Activated naive CD8-positive, alpha-beta T cell treated with anti-CD3 and anti-CD28 coated beads, Interleukin-2, amount 10 ng/mL, durations not matched to agents 7 days and 5 days (primary cell): ENCODE measurements at regions of chr17 and their contacts with region 1.

Region 1: DNA sequence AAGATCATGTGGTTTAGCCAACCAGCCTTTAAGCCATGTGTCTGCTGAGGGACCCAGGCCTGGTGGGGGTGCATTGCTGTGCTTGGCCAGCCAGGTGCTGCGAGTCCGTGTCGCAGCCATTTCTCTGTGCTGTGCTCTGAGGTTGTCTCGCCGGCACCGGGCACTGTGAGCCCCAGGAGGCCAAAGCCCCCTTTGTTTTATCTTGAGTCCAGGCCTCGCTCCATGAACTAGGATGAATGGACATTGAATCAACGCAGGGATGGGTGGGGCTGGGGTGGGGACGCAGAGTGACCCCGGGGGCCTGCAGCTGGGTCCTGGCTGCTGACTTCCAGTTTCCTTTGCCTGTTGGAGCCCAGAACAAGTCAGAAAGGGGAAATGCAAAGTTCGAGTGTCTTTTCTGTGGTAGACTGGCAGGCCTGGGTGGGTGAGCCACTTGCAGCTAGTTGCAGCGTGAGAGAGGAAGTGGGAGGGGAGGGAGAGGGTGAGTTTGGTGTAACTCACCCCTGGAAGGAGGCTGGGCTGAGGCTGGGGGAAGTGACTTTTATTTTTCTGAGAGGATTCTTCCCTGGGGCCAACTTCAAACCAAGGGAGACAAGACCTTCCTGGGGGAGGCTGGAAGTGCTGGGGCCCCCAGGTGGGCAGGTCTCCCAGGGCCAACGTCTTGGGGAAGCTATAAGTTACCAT is 324.7 kb downstream of the SEC14L1 start:
- DNase-seq: peak; percentile 69
- ATAC-seq: peak; percentile 80
- H3K4me3 Mint-ChIP-seq: peak overlapping the region; percentile 79
- H3K27ac Mint-ChIP-seq: peak overlapping the region; percentile 93
- H3K4me1 Mint-ChIP-seq: peaks cover 77% of the 10 kb centered on the region
- H3K27me3 Mint-ChIP-seq: no peaks in the 10 kb centered on the region

Region 2: GRCh38 chr17:77354420-77355241 is 110.9 kb before region 1 on chr17:
- POLR2A ChIA-PET with region 1: no interaction called
- DNase-seq: peak; percentile 19
- ATAC-seq: no peak
- H3K4me3 Mint-ChIP-seq: no peak overlapping the region
- H3K27ac Mint-ChIP-seq: no peak overlapping the region
- H3K4me1 Mint-ChIP-seq: peaks cover 15% of the 10 kb centered on the region
- H3K27me3 Mint-ChIP-seq: peaks cover 1% of the 10 kb centered on the region

Region 3: DNA sequence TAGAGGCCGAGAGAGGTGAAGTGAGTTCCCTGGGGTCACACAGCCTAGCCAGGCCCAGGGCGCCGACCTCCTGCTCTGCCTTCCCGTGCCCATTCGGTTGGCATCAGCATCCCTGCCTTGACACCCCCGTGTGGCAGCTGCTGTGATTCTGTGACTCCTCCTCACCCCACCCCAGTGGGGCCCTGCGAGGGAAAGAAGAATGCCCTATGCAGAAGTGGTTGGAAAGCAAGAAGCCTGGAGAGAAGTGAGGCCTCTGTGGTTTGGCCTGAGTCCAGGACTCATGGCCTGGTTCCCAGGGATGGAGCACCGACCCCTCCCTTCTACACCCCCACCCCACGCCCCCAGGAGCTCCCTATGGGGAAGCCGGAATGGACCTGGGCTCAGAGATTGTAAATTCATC is 28.5 kb before region 1 on chr17:
- POLR2A ChIA-PET with region 1: interaction called, 123 read pairs
- DNase-seq: no peak
- ATAC-seq: no peak
- H3K4me3 Mint-ChIP-seq: peak overlapping the region; percentile 93
- H3K27ac Mint-ChIP-seq: peak overlapping the region; percentile 93
- H3K4me1 Mint-ChIP-seq: peaks cover 72% of the 10 kb centered on the region
- H3K27me3 Mint-ChIP-seq: no peaks in the 10 kb centered on the region

Region 4: GRCh38 chr17:77444984-77445759 is 20.3 kb before region 1 on chr17:
- POLR2A ChIA-PET with region 1: interaction called, 123 read pairs
- DNase-seq: peak; percentile 84
- ATAC-seq: peak; percentile 61
- H3K4me3 Mint-ChIP-seq: peak overlapping the region; percentile 85
- H3K27ac Mint-ChIP-seq: peak overlapping the region; percentile 90
- H3K4me1 Mint-ChIP-seq: peaks cover 79% of the 10 kb centered on the region
- H3K27me3 Mint-ChIP-seq: no peaks in the 10 kb centered on the region

Region 5: GRCh38 chr17:77451245-77451893 is 14.1 kb before region 1 on chr17:
- POLR2A ChIA-PET with region 1: interaction called, 123 read pairs
- DNase-seq: peak; percentile 85
- ATAC-seq: peak; percentile 48
- H3K4me3 Mint-ChIP-seq: peak overlapping the region; percentile 99
- H3K27ac Mint-ChIP-seq: peak overlapping the region; percentile 94
- H3K4me1 Mint-ChIP-seq: peaks cover 51% of the 10 kb centered on the region
- H3K27me3 Mint-ChIP-seq: no peaks in the 10 kb centered on the region